A549 (cell line): ENCODE measurements at regions of chr12 and their contacts with region 1.

Region 1: DNA sequence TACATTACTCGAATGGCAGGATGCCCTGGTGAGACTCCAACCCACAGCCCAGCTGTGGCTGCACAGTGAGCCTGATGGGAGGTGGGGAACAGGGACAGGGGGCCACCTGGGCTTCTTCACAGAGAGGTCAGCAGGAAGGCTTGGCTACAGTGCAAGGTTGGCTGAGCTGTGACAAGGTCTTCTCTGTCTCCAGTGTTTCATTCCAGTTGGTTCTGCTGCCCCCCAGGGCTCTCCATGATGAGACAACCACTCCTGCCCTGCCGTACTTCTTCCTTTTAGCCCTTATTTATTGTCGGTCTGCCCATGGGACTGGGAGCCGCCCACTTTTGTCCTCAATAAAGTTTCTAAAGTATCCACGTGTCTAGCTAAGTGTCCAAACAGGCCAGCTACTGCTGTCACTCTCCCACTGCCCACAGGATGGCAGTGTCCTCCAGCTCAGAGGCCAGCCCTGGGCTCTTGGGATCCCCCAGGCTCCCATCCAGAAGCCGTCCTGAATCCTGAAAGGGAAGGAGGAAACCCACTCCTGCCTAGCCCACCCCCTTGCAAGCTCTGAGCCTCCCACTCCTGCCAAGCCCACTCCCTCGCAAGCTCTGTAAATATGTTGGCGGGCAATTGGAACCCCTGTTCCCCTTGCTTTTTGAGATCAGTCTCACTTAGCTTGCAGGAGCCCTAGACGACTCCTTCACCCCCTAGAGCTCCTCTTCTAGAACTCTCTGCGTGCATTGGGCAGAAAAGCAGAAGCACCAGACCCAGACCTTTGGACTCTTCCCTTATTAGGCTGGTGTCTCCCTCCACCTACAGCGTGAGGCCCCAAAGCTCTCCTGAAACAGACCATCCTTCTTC is 5.4 kb downstream of the C1QL4 start:
- DNase-seq: peak; percentile 83 to 90
- ATAC-seq: peak; percentile 88 to 93
- H3K4me3 ChIP-seq: no peak overlapping the region
- H3K27ac ChIP-seq: peak overlapping the region in 1 of 2 experiments; percentile 28; a peak in 1 of 6 replicates
- H3K4me1 ChIP-seq: peaks cover 6% of the 10 kb centered on the region; the same call in 2 of the 3 replicates
- CTCF ChIP-seq: peak; percentile 82
- EP300 ChIP-seq: no peak
- POLR2A ChIP-seq: no peak
- RAD21 ChIP-seq: peak; percentile 85 to 86

Region 2: DNA sequence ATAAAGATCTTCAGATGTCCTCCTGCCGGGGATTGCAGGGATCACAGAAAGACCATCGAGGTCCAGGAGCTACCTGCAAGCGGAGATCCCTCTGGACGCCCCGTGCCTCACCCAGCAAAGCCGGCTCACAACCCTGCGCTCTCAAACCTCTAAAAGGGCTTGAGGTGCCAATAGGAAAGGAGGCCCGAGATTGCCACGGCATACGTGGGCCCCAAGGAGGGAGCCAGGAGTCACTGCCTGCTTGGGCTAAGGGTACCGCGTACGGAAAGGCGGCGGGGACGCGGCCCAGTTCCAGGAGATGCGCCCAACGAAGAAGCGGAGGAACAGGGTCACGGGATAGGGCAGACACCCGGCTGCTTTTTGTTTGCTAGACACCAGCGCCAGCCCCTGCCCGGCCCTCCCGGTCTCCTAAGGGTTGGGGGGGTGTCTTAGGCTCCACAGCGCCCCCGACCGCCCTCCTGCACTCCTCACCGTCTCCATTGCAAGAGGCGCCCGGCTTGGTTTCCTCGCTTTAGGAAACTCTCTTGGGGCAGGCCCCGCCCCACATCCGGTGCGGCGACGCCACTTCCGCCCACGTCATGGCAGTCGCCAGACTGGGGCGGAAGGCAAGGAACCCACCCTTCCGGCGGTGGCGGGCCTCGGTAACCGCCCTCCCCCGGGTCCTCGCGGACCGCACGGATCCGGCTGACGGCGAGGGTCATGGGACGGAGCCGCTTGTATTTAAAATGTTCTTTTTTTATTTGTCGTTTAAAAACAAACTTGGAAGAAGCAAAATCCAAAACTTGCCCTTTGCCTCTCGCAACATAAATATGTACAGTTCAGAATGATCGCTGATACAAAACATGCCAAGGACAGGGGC is 313.1 kb before region 1 on chr12 and contains the start of gene PRKAG1:
- CTCF ChIA-PET with region 1: no interaction called
- POLR2A ChIA-PET with region 1: no interaction called
- DNase-seq: peak; percentile 98
- ATAC-seq: peak; percentile 87 to 92
- H3K4me3 ChIP-seq: peak within 1 kb of the TSS; percentile 83
- H3K27ac ChIP-seq: peak within 1 kb of the TSS; percentile 92 to 93
- H3K4me1 ChIP-seq: peaks cover 22% of the 10 kb centered on the region
- CTCF ChIP-seq: peak; percentile 59
- EP300 ChIP-seq: no peak
- POLR2A ChIP-seq: peak; percentile 77
- RAD21 ChIP-seq: peak; percentile 18 to 28; a peak in 1 of 5 replicates
- polyA plus RNA-seq, gene PRKAG1: 100 and 117 TPM in 2 replicates

Region 3: DNA sequence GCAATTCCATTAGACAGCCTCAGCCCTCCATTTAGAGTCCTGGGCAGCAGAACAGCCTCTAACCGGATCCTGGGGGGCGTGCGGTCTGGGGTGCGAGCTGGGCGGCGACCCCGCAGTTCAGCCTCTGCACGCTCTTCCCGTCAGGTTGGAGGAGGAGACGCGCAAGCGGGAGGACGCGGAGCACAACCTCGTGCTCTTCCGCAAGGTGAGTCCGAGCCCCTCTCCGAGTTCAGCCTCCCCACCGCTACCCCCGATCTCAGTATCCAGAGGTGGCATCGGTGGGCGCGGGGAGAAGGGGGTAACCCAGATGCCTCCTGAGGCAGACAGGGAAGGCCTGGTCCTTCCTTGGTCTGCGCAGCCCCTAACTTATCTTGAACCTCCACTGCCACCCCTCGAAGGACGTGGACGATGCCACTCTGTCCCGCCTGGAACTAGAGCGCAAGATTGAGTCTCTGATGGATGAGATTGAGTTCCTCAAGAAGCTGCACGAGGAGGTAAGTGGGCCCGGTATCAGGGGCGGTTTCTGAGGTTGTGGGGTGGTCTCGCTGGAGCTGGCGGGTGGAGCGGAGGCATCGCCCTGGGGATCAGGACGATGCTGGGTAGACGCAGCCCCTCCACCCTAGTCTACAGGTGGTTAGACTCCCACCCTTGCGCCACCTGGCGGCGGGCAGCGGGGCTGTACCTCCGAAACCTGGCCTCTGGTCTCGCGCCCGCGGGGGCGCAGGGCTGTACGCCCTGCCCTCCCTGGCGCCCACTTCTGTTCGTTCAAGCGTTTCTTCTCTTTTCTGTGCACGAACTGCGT is 35.4 kb before region 1 on chr12:
- CTCF ChIA-PET with region 1: interaction called, 61 read pairs
- POLR2A ChIA-PET with region 1: no interaction called
- DNase-seq: peak; percentile 69 to 88
- ATAC-seq: peak; percentile 60 to 83
- H3K4me3 ChIP-seq: peak overlapping the region; percentile 52
- H3K27ac ChIP-seq: peak overlapping the region; percentile 50 to 80; a peak in 5 of 6 replicates
- H3K4me1 ChIP-seq: peaks cover 18% of the 10 kb centered on the region; the same call in 2 of the 3 replicates
- CTCF ChIP-seq: peak; percentile 81
- EP300 ChIP-seq: no peak
- POLR2A ChIP-seq: no peak
- RAD21 ChIP-seq: peak in 1 of 2 experiments; percentile 34; a peak in 2 of 5 replicates

Region 4: GRCh38 chr12:49309391-49309790 is 22.2 kb before region 1 on chr12:
- CTCF ChIA-PET with region 1: interaction called, 11 read pairs
- POLR2A ChIA-PET with region 1: no interaction called
- DNase-seq: peak in 1 of 2 experiments; percentile 25
- ATAC-seq: peak in 1 of 2 experiments; percentile 59; a peak in 3 of 6 replicates
- H3K4me3 ChIP-seq: no peak overlapping the region
- H3K27ac ChIP-seq: no peak overlapping the region
- H3K4me1 ChIP-seq: 0 out of 3 replicates have a peak, but pooled peaks cover 3% of the 10 kb centered on the region
- CTCF ChIP-seq: no peak
- EP300 ChIP-seq: no peak
- POLR2A ChIP-seq: no peak
- RAD21 ChIP-seq: no peak

Region 5: DNA sequence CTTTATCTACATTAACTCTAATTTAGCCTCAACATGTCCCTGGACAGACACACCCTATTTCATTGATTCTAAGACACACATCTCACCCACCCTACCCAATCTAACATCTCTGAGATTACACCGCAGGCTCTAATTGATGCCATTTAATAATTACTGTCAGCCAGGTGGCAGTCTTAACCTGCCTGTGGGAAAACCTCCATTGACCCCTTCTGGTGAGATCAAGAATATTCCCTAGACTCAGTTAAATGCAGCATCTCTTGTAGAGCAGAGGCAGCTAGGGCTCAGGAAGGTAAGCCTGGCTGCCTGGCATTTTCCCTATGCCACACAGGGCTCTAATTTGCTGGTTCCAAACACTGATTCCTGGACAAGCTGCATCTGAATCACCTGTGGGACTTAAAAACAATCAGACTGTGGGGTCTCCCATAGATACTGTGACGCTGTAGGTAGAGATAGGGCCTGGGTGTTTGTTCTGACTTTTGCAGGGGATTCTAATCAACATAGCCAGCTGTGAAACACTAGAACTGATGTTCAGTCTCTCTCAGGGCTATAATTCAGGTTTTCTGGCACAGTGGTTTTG is 222.0 kb after region 1 on chr12:
- CTCF ChIA-PET with region 1: interaction called, 54 read pairs
- POLR2A ChIA-PET with region 1: no interaction called
- DNase-seq: peak; percentile 68 to 71
- ATAC-seq: peak; percentile 58 to 75
- H3K4me3 ChIP-seq: no peak overlapping the region
- H3K27ac ChIP-seq: no peak overlapping the region
- H3K4me1 ChIP-seq: no peaks in the 10 kb centered on the region
- CTCF ChIP-seq: peak; percentile 72
- EP300 ChIP-seq: no peak
- POLR2A ChIP-seq: no peak
- RAD21 ChIP-seq: peak; percentile 72 to 87

Region 6: DNA sequence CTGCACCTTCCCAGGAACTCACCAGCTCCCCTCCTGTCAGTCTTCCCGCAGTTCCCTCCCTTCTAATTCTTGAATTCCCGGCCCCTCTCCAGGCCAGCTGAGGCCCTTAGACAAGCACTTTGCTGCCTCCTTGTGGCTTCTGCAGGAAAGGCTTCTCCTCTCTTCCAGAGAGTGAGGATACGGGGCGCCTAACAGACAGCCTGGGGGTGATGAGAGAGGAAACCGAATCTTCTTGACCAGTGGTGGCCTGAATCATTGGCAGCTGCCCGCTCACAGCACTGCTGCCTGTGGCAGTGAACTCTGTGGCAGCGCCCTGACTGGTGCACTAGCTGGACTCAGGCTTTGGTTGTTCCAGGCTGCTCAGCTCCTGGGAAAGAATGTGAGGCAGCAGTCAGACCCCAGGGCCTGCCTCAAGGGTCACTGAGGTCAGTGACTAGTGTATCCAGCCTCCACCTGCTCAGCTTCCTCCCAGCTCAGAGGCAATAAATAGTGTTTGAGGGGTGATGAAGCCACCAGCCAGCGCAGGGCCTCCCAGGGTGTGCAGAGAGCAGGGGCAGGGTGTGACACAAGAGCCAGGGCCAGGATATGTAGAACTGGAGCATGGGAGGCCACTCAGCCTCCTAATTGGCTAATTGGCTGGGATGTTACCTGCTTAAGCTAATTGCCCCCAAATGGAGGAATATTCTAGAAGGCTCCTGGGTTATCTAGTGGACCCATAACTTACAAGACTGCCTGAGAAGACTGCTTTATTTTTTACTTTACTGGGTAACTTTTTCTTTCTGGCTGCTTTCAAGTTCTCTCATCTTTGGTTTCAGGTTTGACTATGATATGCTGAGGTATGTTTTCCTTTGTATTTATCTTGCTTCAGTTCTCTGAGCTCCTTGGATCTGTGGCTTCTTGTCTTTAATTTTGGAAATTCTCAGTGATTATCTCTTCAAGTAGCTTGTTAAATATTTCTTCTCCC is 249.3 kb after region 1 on chr12:
- CTCF ChIA-PET with region 1: interaction called, 111 read pairs
- POLR2A ChIA-PET with region 1: no interaction called
- DNase-seq: peak; percentile 83 to 86
- ATAC-seq: peak; percentile 95 to 98
- H3K4me3 ChIP-seq: no peak overlapping the region
- H3K27ac ChIP-seq: 0 out of 6 replicates have a peak overlapping the region, but pooled peaks of 1 of the 2 experiments have one; percentile 22
- H3K4me1 ChIP-seq: peaks cover 16% of the 10 kb centered on the region; the same call in 2 of the 3 replicates
- CTCF ChIP-seq: peak; percentile 81
- EP300 ChIP-seq: no peak
- POLR2A ChIP-seq: no peak
- RAD21 ChIP-seq: peak; percentile 83 to 90